ENCODE measurements at regions of chr6 and their contacts with region 1.

Region 1: DNA sequence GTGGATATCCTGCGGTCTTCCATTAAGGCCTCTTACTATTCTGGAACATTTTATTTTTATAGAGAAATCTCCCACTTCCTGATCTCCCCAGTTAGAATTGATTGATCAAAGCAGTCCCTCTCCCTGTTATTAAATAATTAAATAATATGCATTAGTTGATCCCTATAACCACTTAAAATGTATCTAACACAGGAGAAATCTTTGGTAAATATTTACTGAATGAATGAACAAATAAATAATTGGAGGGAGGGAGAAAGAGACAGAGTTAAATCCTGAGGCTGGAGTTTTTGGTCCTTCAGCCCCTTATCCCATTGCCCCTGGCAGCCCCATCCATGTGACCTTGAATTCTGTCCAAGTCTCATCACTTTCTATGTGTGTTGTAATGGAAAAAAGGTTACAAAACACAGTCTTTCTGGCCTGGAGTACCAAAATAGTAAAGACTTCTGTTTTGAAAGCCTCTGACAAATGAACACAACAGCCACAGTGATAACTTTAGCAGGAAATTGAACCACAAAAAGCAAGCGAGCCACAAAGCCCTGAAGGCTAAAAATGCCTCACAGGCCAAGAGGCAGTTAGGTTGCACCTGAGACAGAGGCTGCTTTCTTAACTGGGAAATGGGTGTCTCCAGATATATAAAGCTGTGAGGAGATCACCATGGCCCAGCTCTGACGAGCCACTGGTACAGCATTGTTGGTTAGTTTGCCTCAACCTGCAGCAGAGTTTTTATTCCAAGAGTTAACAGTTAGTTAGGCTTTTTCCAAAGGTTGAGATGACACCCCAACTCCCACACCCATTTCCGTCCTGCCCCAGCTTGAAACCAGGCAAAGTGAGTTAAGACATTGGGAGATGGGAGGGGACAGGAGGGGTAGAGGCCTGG is 11.3 kb downstream of the NT5E start:
- DNase-seq: no peak
- H3K4me3 ChIP-seq: no peak overlapping the region
- H3K27ac ChIP-seq: peak overlapping the region; percentile 83
- H3K4me1 ChIP-seq: peaks cover 83% of the 10 kb centered on the region
- H3K27me3 ChIP-seq: no peaks in the 10 kb centered on the region
- CTCF ChIP-seq: no peak
- POLR2A ChIP-seq: no peak

Region 2: GRCh38 chr6:84764332-84765049 is 696.7 kb before region 1 on chr6 and contains the start of gene TBX18:
- intact Hi-C with region 1: loop called (anchors 10 kb)
- DNase-seq: peak in 1 of 2 donors; percentile 96
- H3K4me3 ChIP-seq: peak within 1 kb of the TSS; percentile 47 to 55
- H3K27ac ChIP-seq: peak within 1 kb of the TSS; percentile 78
- H3K4me1 ChIP-seq: peaks cover 9% of the 10 kb centered on the region
- H3K27me3 ChIP-seq: peaks cover 19% of the 10 kb centered on the region
- CTCF ChIP-seq: no peak
- POLR2A ChIP-seq: peak in 1 of 2 donors; percentile 34
- total RNA-seq, gene TBX18: 9.8 TPM

Region 3: DNA sequence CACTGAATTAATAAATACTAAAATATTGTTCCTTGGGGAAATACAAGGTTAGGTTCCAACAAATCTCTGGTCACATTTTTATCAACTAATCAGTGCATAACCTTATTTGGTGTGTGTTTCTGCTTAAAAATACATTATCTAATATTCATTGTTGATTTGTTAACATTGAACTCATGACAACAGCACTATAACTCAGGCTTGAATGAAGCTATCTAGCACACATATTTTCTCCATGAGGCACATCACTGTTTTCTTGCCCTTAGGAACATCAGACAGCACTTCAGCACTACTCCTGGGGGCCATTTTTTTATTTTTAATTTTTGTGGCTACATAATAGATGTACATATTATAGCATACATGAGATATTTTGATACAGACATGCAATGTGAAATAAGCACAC is 288.5 kb before region 1 on chr6:
- intact Hi-C with region 1: no loop called
- DNase-seq: no peak
- H3K4me3 ChIP-seq: no peak overlapping the region
- H3K27ac ChIP-seq: no peak overlapping the region
- H3K4me1 ChIP-seq: no peaks in the 10 kb centered on the region
- H3K27me3 ChIP-seq: no peaks in the 10 kb centered on the region
- CTCF ChIP-seq: no peak
- POLR2A ChIP-seq: no peak

Region 4: GRCh38 chr6:87078983-87079616 is 1617.9 kb after region 1 on chr6:
- intact Hi-C with region 1: no loop called
- DNase-seq: no peak
- H3K4me3 ChIP-seq: no peak overlapping the region
- H3K27ac ChIP-seq: no peak overlapping the region
- H3K4me1 ChIP-seq: no peaks in the 10 kb centered on the region
- H3K27me3 ChIP-seq: no peaks in the 10 kb centered on the region
- CTCF ChIP-seq: peak in 2 of 3 experiments; percentile 17 to 20
- POLR2A ChIP-seq: no peak